Breast epithelium (tissue), 4 donors: ENCODE measurements at regions of chr1 and their contacts with region 1.

Region 1: DNA sequence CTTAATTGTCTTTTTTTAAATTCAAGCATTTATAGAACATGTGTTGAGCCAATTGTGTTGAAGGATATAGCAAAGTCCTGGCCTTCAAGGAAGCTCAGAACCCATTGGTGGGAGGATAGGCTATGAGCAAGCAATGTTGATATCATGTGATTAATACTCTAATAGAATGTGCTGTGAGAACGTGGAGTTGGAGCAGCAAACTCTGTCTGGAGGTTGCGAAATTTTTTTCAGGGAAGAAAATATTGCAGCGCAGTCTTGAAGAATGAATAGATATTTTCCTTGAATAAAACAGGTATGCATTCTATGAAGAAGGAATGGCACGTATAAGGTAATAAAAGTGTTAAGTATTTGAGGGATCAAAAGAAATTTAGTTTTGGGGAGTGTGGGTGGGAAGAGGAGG is 229.2 kb upstream of the KCNK2 start:
- DNase-seq: no peak
- H3K4me3 ChIP-seq: no peak overlapping the region
- H3K27ac ChIP-seq: no peak overlapping the region
- H3K4me1 ChIP-seq: no peaks in the 10 kb centered on the region
- H3K27me3 ChIP-seq: no peaks in the 10 kb centered on the region
- CTCF ChIP-seq: no peak
- POLR2A ChIP-seq: no peak

Region 2: DNA sequence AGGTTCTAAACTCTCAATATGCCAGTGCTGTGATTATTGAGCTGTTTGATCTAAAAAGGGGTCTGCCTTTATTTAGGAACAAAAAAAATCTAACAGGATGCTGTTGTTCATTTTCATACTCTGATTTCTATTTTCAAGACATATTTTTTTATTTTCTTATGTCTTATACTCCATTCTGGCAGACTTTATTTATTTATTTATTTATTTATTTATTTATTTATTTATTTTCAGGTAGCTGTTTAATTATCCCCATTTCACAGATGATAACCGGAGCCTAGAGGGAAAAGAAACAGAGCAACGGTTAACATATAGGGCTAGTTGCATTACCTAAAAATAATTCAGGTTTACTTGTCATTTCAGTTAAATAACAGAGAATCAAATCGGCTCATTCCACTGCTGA is 76.0 kb before region 1 on chr1:
- intact Hi-C with region 1: no loop called
- DNase-seq: no peak
- H3K4me3 ChIP-seq: no peak overlapping the region
- H3K27ac ChIP-seq: no peak overlapping the region
- H3K4me1 ChIP-seq: no peaks in the 10 kb centered on the region
- H3K27me3 ChIP-seq: no peaks in the 10 kb centered on the region
- CTCF ChIP-seq: no peak
- POLR2A ChIP-seq: no peak

Region 3: DNA sequence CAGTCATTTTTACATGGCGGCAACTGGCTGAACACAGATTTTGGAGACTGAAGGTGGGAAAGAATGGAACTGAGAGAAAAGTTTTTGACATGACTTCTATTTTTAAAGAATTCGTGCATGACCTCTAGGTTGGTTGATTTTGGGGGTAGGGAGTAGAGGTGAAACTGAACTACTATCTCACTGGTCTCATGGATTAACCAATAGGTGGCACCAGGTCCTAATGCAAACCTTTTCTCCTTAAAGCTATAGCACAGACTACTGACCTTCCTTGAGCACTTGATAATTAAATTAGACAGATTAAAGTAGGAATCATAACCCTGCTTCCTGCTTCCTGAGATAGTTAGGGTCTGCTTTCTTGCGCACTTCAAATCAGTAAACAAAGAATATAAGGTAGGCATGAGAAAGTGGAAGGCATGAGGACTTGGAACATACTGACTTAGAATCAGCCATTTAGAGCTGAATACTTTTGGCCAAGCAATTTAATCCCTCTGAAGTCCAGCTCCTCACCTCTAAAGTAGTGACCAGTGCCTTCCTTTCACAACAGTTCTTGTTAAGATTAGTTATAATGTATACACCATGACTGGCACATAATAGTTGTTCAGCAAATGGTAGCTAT is 44.4 kb before region 1 on chr1:
- intact Hi-C with region 1: loop called (anchors 2 kb)
- DNase-seq: no peak
- H3K4me3 ChIP-seq: no peak overlapping the region
- H3K27ac ChIP-seq: no peak overlapping the region
- H3K4me1 ChIP-seq: no peaks in the 10 kb centered on the region
- H3K27me3 ChIP-seq: no peaks in the 10 kb centered on the region
- CTCF ChIP-seq: no peak
- POLR2A ChIP-seq: no peak